Heart right ventricle (tissue), 16 donors: ENCODE measurements at regions of chr4 and their contacts with region 1.

Region 1: DNA sequence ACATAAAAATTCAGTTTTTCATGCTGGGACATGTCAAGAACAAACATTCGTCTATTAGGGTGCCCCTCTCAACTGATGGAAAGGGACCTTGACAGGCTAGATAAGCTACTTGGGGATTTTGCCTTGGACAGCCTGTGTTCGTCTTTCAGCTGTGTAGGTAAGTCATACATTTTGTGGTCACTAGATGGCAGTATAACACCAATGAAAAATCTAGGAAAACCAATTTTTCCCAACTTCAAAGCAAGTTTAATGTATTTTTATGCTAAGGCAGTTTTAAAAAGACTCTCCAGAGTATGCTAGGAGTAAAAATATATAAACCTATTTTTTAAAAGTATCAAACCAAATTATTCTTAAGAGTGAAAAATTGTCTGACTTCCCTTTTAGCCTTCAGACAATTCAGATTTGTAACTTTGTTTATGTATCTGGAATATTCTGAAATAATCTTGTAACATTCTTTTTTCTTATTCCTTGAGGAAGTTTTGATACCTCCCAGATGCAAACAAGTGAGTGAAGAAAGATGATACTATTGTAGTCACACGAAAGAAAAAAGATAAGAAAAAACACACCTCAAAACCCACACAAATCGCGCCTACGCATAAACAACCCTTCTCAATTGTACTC is 158.3 kb downstream of the CPE start:
- DNase-seq: peak in 1 of 2 donors; percentile 6
- ATAC-seq: peak in 3 of 8 donors; percentile 38 to 50 (median 47)
- H3K4me3 ChIP-seq: no peak overlapping the region
- H3K27ac ChIP-seq: no peak overlapping the region
- H3K4me1 ChIP-seq: no peaks in the 10 kb centered on the region
- H3K27me3 ChIP-seq: peaks cover 0 to 5% (median 0%) of the 10 kb centered on the region in 7 donors
- CTCF ChIP-seq: peak; percentile 49 to 88 (median 77)

Region 2: DNA sequence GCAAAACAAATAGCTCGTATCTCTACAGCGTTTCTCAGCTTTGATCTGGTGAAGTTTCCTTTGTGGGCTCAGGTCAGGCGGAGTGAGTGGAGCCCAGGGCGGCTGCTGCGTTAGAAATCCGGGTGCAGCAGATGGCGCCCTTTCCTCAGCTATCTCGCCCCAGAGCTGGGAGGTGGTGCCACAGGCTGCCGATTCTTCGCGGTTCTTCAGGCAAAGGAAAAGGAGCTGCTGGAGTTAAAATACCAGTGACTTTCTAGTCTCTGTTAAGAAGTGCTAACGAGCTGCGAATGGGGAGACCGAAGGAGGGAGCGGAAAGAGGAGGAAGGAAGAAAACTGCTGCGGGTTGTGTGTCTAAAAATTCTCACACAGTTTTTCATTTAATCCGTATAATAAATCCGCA is 43.8 kb before region 1 on chr4:
- intact Hi-C with region 1: loop called in 1 of 10 experiments (anchors 2 kb)
- DNase-seq: peak; percentile 51 to 74
- ATAC-seq: peak; percentile 86 to 97 (median 92)
- H3K4me3 ChIP-seq: peak overlapping the region in 2 of 10 donors; percentile 13 to 25
- H3K27ac ChIP-seq: no peak overlapping the region
- H3K4me1 ChIP-seq: peaks cover 0 to 7% (median 0%) of the 10 kb centered on the region in 9 donors
- H3K27me3 ChIP-seq: peaks cover 0 to 13% (median 0%) of the 10 kb centered on the region in 7 donors
- CTCF ChIP-seq: peak; percentile 39 to 83 (median 67)

Region 3: GRCh38 chr4:165700855-165701254 is 163.7 kb after region 1 on chr4:
- intact Hi-C with region 1: loop called in 3 of 10 experiments (anchors 10 kb)
- DNase-seq: no peak
- ATAC-seq: no peak
- H3K4me3 ChIP-seq: no peak overlapping the region
- H3K27ac ChIP-seq: no peak overlapping the region
- H3K4me1 ChIP-seq: no peaks in the 10 kb centered on the region
- H3K27me3 ChIP-seq: no peaks in the 10 kb centered on the region
- CTCF ChIP-seq: peak in 3 of 9 donors; percentile 11 to 24 (median 20)

Region 4: DNA sequence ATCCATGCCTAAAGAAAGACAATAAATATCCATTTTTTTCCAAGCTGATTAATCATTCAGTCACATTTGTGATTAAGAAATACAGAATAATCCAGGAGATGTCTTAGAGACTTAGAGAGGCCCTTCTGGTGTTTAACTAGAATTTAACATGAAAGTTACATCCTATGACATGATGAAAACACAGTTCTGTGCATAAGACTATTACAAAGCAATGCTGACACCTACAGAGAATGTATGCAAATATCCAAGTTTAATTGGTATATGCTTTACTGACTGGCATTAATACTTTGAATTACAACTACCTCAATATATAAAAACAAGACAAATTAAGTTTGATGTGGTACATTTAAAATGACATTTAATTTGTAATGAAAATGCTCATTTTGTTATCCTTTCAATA is 318.1 kb after region 1 on chr4:
- intact Hi-C with region 1: loop called in 3 of 10 experiments (anchors 2 to 10 kb)
- DNase-seq: no peak
- ATAC-seq: no peak
- H3K4me3 ChIP-seq: no peak overlapping the region
- H3K27ac ChIP-seq: no peak overlapping the region
- H3K4me1 ChIP-seq: no peaks in the 10 kb centered on the region
- H3K27me3 ChIP-seq: no peaks in the 10 kb centered on the region
- CTCF ChIP-seq: peak in 3 of 9 donors; percentile 8 to 32 (median 27)

Region 5: DNA sequence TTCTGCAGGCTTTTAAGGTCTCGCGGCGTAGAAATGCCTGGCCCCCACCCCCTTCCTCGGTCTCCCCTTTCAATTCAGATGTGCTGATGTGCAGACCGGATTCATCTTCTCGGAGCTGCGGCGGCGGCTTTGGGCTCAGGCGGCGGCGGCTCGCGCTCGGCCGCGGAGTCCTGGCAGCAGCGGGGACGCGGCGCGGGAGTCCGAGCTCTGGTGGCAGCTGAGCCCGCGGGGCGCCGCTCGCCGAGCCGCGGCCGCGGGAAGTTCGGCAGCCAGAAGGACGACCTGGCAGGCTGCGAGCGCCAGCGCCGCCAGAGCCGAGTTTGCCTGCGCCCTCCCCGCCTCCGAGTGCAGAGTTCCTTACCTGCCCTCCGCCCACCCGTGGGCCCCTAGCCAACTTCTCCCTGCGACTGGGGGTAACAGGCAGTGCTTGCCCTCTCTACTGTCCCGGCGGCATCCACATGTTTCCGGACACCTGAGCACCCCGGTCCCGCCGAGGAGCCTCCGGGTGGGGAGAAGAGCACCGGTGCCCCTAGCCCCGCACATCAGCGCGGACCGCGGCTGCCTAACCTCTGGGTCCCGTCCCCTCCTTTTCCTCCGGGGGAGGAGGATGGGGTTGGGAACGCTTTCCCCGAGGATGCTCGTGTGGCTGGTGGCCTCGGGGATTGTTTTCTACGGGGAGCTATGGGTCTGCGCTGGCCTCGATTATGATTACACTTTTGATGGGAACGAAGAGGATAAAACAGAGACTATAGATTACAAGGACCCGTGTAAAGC is 336.3 kb after region 1 on chr4:
- intact Hi-C with region 1: loop called in 3 of 10 experiments (anchors 5 to 10 kb)
- DNase-seq: peak; percentile 13 to 36
- ATAC-seq: peak; percentile 63 to 85 (median 73)
- H3K4me3 ChIP-seq: peak overlapping the region; percentile 49 to 73 (median 60)
- H3K27ac ChIP-seq: peak overlapping the region in 4 of 10 donors; percentile 36 to 63 (median 45)
- H3K4me1 ChIP-seq: peaks cover 0 to 24% (median 18%) of the 10 kb centered on the region in 9 donors
- H3K27me3 ChIP-seq: peaks cover 0 to 47% (median 10%) of the 10 kb centered on the region in 7 donors
- CTCF ChIP-seq: no peak

Region 6: GRCh38 chr4:165921546-165921945 is 384.4 kb after region 1 on chr4:
- intact Hi-C with region 1: no loop called
- DNase-seq: no peak
- ATAC-seq: no peak
- H3K4me3 ChIP-seq: no peak overlapping the region
- H3K27ac ChIP-seq: no peak overlapping the region
- H3K4me1 ChIP-seq: no peaks in the 10 kb centered on the region
- H3K27me3 ChIP-seq: no peaks in the 10 kb centered on the region
- CTCF ChIP-seq: no peak